SK-MEL-5 (cell line): ENCODE measurements at regions of chr2 and their contacts with region 1.

Region 1: GRCh38 chr2:234102112-234102511 is 51.6 kb downstream of the SPP2 start:
- DNase-seq: peak; percentile 25

Region 2: GRCh38 chr2:234451852-234452625 is 349.9 kb after region 1 on chr2:
- in situ Hi-C with region 1: loop called (anchors 10 kb)
- DNase-seq: no peak